ENCODE measurements at regions of chr3 and their contacts with region 1.

Region 1: GRCh38 chr3:3179407-3180094 is at the start of gene CRBN:
- DNase-seq: peak; percentile 78 to 95 (median 86)
- ATAC-seq: peak; percentile 96
- H3K4me3 ChIP-seq: peak within 1 kb of the TSS; percentile 97
- H3K4me3 Mint-ChIP-seq: peak within 1 kb of the TSS; percentile 92
- H3K27ac ChIP-seq: peak within 1 kb of the TSS; percentile 69 to 94
- H3K27ac Mint-ChIP-seq: peak within 1 kb of the TSS; percentile 92
- H3K4me1 ChIP-seq: peaks cover 31% of the 10 kb centered on the region
- H3K4me1 Mint-ChIP-seq: peaks cover 45% of the 10 kb centered on the region
- H3K27me3 ChIP-seq: no peaks in the 10 kb centered on the region
- H3K27me3 Mint-ChIP-seq: no peaks in the 10 kb centered on the region
- CTCF ChIP-seq: peak; percentile 99
- total RNA-seq, gene CRBN: 144 to 148 TPM

Region 2: DNA sequence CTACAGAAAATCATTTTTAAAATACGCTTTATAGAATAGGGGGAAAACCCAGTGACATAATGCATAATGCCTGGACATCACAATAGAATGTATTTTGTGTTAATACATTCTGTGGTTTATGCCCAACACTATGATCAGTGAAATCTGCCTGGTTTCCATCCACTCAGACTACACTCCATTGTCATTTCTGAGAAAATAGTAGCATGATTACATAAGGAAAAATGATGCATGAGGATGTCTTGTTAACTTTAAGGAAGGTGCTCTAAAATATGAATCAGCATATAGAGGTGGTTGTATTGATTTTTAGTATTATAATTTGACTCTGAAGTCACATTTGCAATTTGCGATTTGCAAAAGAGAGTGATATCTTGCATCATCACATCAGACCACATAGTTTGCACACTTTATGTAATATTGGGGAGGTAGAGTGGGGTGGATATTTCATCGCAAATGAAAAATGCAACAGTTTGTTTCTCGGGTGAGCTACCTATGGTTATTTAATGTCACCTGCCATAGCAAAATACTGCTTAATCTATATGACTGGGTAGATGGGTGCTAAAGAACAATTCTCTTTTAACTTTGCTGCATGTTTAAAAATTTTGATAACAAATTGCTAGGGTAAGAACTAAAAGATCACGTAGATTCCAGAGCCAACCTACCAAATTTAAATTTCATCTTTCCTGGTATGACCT is 473.3 kb before region 1 on chr3:
- CTCF ChIA-PET with region 1: no interaction called
- POLR2A ChIA-PET with region 1: no interaction called
- intact Hi-C with region 1: loop called in 1 of 2 experiments (anchors 10 kb)
- DNase-seq: no peak
- ATAC-seq: no peak
- H3K4me3 ChIP-seq: no peak overlapping the region
- H3K4me3 Mint-ChIP-seq: no peak overlapping the region
- H3K27ac ChIP-seq: no peak overlapping the region
- H3K27ac Mint-ChIP-seq: no peak overlapping the region
- H3K4me1 ChIP-seq: no peaks in the 10 kb centered on the region
- H3K4me1 Mint-ChIP-seq: no peaks in the 10 kb centered on the region
- H3K27me3 ChIP-seq: peaks cover 0 to 2% of the 10 kb centered on the region in 2 experiments
- H3K27me3 Mint-ChIP-seq: no peaks in the 10 kb centered on the region
- CTCF ChIP-seq: no peak

Region 3: DNA sequence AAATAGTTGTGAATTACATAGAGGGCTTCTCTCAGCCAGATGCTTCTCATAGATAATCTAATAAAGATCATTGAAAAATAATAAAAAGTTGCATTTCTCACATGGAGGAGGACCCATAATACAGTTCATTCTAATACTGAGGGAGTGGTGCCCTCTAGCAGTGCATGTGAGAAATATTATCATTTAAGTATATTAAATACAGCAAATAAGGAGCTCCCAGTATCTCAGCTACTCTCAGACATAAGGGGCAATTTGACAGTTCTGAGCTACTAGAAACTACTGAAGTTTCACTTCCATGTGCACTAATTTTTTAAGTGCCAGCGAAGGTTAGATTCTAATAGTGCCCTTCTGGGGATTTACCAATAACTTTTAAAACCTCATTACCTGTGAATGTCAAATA is 257.6 kb before region 1 on chr3:
- CTCF ChIA-PET with region 1: no interaction called
- POLR2A ChIA-PET with region 1: no interaction called
- intact Hi-C with region 1: loop called in 1 of 2 experiments (anchors 10 kb)
- DNase-seq: peak in 3 of 14 experiments; percentile 3 to 11 (median 6)
- ATAC-seq: no peak
- H3K4me3 ChIP-seq: no peak overlapping the region
- H3K4me3 Mint-ChIP-seq: no peak overlapping the region
- H3K27ac ChIP-seq: no peak overlapping the region
- H3K27ac Mint-ChIP-seq: no peak overlapping the region
- H3K4me1 ChIP-seq: no peaks in the 10 kb centered on the region
- H3K4me1 Mint-ChIP-seq: no peaks in the 10 kb centered on the region
- H3K27me3 ChIP-seq: no peaks in the 10 kb centered on the region
- H3K27me3 Mint-ChIP-seq: no peaks in the 10 kb centered on the region
- CTCF ChIP-seq: no peak

Region 4: GRCh38 chr3:3141939-3142338 is 37.6 kb before region 1 on chr3:
- CTCF ChIA-PET with region 1: no interaction called
- POLR2A ChIA-PET with region 1: no interaction called
- intact Hi-C with region 1: loop called in 1 of 2 experiments (anchors 1 kb)
- DNase-seq: no peak
- ATAC-seq: no peak
- H3K4me3 ChIP-seq: no peak overlapping the region
- H3K4me3 Mint-ChIP-seq: no peak overlapping the region
- H3K27ac ChIP-seq: no peak overlapping the region
- H3K27ac Mint-ChIP-seq: peak overlapping the region; percentile 66
- H3K4me1 ChIP-seq: no peaks in the 10 kb centered on the region
- H3K4me1 Mint-ChIP-seq: peaks cover 38% of the 10 kb centered on the region
- H3K27me3 ChIP-seq: no peaks in the 10 kb centered on the region
- H3K27me3 Mint-ChIP-seq: no peaks in the 10 kb centered on the region
- CTCF ChIP-seq: no peak

Region 5: GRCh38 chr3:4303187-4304123 is 1123.9 kb after region 1 on chr3 and contains the start of gene SETMAR:
- CTCF ChIA-PET with region 1: no interaction called
- POLR2A ChIA-PET with region 1: interaction called, 3 read pairs
- intact Hi-C with region 1: loop called in 1 of 2 experiments (anchors 5 kb)
- DNase-seq: peak; percentile 69 to 90 (median 78)
- ATAC-seq: peak; percentile 92
- H3K4me3 ChIP-seq: peak within 1 kb of the TSS; percentile 83
- H3K4me3 Mint-ChIP-seq: peak within 1 kb of the TSS; percentile 95
- H3K27ac ChIP-seq: peak within 1 kb of the TSS; percentile 80 to 89
- H3K27ac Mint-ChIP-seq: peak within 1 kb of the TSS; percentile 94
- H3K4me1 ChIP-seq: peaks cover 20% of the 10 kb centered on the region
- H3K4me1 Mint-ChIP-seq: peaks cover 41% of the 10 kb centered on the region
- H3K27me3 ChIP-seq: no peaks in the 10 kb centered on the region
- H3K27me3 Mint-ChIP-seq: no peaks in the 10 kb centered on the region
- CTCF ChIP-seq: no peak
- total RNA-seq, gene SETMAR: 9.1 to 9.2 TPM

Region 6: GRCh38 chr3:4986782-4987537 is 1807.4 kb after region 1 on chr3:
- CTCF ChIA-PET with region 1: no interaction called
- POLR2A ChIA-PET with region 1: no interaction called
- intact Hi-C with region 1: no loop called
- DNase-seq: peak; percentile 45 to 88 (median 58)
- ATAC-seq: peak; percentile 37
- H3K4me3 ChIP-seq: peak overlapping the region; percentile 67
- H3K4me3 Mint-ChIP-seq: peak overlapping the region; percentile 86
- H3K27ac ChIP-seq: peak overlapping the region; percentile 29 to 59
- H3K27ac Mint-ChIP-seq: peak overlapping the region; percentile 89
- H3K4me1 ChIP-seq: peaks cover 55% of the 10 kb centered on the region
- H3K4me1 Mint-ChIP-seq: peaks cover 45% of the 10 kb centered on the region
- H3K27me3 ChIP-seq: no peaks in the 10 kb centered on the region
- H3K27me3 Mint-ChIP-seq: no peaks in the 10 kb centered on the region
- CTCF ChIP-seq: no peak